Ovary (tissue), 10 donors: ENCODE measurements at regions of chr1 and their contacts with region 1.

Region 1: GRCh38 chr1:13960375-13960987 is 260.5 kb downstream of the PRDM2 start:
- DNase-seq: peak; percentile 72 to 86 (median 84)
- H3K4me3 ChIP-seq: no peak overlapping the region
- H3K27ac ChIP-seq: no peak overlapping the region
- H3K4me1 ChIP-seq: no peaks in the 10 kb centered on the region
- H3K27me3 ChIP-seq: no peaks in the 10 kb centered on the region
- CTCF ChIP-seq: peak; percentile 87 to 96 (median 90)
- EP300 ChIP-seq: no peak
- POLR2A ChIP-seq: no peak

Region 2: GRCh38 chr1:13662493-13662892 is 298.0 kb before region 1 on chr1:
- intact Hi-C with region 1: loop called (anchors 2 to 5 kb)
- DNase-seq: peak in 2 of 5 donors; percentile 50 to 60
- H3K4me3 ChIP-seq: no peak overlapping the region
- H3K27ac ChIP-seq: no peak overlapping the region
- H3K4me1 ChIP-seq: peaks cover 1% of the 10 kb centered on the region
- H3K27me3 ChIP-seq: no peaks in the 10 kb centered on the region
- CTCF ChIP-seq: no peak
- EP300 ChIP-seq: no peak
- POLR2A ChIP-seq: no peak

Region 3: GRCh38 chr1:13667691-13668090 is 292.8 kb before region 1 on chr1:
- intact Hi-C with region 1: loop called (anchors 2 to 5 kb)
- DNase-seq: no peak
- H3K4me3 ChIP-seq: no peak overlapping the region
- H3K27ac ChIP-seq: no peak overlapping the region
- H3K4me1 ChIP-seq: peaks cover 1% of the 10 kb centered on the region
- H3K27me3 ChIP-seq: no peaks in the 10 kb centered on the region
- CTCF ChIP-seq: no peak
- EP300 ChIP-seq: no peak
- POLR2A ChIP-seq: no peak

Region 4: DNA sequence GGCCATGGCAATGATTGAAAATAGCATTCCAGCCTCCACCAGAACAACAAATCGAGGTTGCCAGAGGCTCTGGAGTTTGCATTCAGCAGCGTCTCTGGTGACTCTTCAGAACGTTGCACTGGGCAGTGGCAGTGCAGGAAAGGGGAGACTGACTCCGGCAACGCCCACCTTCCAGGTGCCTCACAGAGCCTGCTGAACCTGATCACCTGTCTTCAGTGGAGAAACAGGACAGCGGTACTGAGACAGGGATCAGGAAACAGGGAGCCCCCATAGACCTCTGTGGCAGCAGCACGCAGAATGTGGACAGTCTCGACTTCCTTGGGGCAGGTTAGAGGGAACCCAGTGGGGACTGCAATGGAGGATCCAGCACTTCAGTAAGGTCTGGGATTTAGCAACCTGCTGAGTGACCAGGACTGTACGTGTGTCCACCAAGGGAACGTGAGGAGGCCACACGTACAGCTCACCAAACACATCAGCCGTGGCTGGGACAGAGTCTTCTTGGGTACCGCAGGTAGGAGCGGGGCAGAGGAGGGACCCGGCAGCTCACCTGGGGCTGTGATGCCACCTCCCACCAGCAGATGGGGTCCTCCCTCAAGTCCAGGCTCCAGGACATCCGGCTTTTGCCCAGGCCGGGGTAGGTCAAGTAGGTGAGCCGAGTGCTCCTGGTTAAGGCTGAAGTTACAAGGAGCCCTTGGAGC is 131.9 kb before region 1 on chr1:
- intact Hi-C with region 1: loop called (anchors 2 to 10 kb)
- DNase-seq: peak; percentile 55 to 78 (median 58)
- H3K4me3 ChIP-seq: no peak overlapping the region
- H3K27ac ChIP-seq: no peak overlapping the region
- H3K4me1 ChIP-seq: peaks cover 7% of the 10 kb centered on the region
- H3K27me3 ChIP-seq: no peaks in the 10 kb centered on the region
- CTCF ChIP-seq: peak in 2 of 3 donors; percentile 58 to 61
- EP300 ChIP-seq: no peak
- POLR2A ChIP-seq: no peak

Region 5: DNA sequence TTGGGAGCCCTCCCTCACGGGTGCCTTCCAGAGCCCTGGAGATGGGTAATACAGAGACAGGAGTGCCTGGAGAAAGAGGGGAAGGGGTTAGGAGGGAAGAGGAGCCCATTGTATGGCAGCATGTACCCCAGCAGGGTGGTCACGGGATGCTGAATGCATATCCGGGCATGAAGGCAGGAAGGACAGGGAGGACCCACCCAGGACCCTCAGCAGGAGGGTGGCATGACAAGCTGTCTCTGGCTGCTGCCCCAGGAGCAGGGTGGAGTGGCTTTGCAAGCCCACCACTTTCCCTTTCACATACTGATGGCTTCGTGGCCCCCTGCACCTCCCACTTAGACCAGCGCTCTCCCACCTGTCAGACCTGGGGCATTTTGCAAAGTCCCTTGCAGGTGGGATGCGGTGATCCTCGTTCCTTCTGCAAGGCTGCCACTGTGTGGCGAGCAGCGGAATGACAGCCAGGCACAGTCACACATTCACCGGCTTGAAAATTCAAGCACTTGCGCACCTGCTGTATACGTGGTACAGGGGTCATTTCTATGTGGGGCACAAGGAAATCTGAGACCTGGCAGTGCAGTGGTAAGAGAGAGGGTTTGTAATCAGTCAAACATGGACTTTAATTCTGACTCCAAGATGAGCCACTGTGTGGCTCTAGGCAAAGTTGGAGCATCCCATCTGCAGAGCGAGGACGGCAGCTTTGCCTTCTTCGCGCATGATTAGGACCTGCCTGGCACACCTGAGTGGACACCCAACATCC is 1139.8 kb after region 1 on chr1:
- intact Hi-C with region 1: loop called in 2 of 4 experiments (anchors 5 to 10 kb)
- DNase-seq: peak; percentile 46 to 76 (median 57)
- H3K4me3 ChIP-seq: no peak overlapping the region
- H3K27ac ChIP-seq: no peak overlapping the region
- H3K4me1 ChIP-seq: no peaks in the 10 kb centered on the region
- H3K27me3 ChIP-seq: no peaks in the 10 kb centered on the region
- CTCF ChIP-seq: peak; percentile 63 to 84 (median 82)
- EP300 ChIP-seq: no peak
- POLR2A ChIP-seq: no peak

Region 6: DNA sequence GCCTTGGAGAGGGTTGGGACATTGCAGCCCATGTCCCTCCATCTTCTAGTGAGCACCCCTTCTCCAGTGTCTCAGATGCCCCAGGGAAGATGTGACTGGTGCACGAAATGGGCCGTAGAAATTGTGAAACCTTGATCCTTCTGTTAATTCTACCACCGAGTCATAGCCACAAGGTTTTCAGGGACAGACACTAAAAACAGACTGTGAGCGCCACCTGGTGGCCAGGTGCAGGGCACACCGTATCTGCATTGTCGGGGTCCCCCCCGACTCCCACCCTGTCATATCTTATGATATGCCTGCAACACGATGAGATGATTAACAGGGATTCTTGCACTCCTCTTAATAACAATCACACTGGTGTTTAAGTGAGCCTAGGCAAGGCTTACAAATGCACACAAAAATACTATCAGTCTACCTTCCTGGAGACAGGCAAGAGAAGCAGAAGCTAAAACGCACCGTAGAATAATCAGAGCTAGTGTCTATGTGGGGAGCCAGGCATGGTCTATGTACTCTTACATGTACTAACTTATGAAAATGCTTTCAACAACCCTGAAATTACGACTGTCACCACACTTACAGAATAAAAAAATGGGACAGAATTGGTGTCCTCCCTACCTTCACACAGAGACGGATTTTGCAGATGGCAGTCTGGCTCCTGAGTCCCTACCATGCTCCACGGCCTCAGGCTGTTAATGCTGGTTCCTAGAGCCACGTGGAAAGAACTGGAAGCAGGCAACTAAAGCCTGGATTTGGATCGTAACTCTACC is 1344.4 kb after region 1 on chr1:
- intact Hi-C with region 1: loop called in 1 of 4 experiments (anchors 10 kb)
- DNase-seq: peak; percentile 64 to 85 (median 73)
- H3K4me3 ChIP-seq: no peak overlapping the region
- H3K27ac ChIP-seq: no peak overlapping the region
- H3K4me1 ChIP-seq: peaks cover 2% of the 10 kb centered on the region
- H3K27me3 ChIP-seq: no peaks in the 10 kb centered on the region
- CTCF ChIP-seq: peak; percentile 68 to 78 (median 77)
- EP300 ChIP-seq: no peak
- POLR2A ChIP-seq: no peak